Left cardiac atrium (tissue), 4 donors: ENCODE measurements at regions of chr6 and their contacts with region 1.

Region 1: DNA sequence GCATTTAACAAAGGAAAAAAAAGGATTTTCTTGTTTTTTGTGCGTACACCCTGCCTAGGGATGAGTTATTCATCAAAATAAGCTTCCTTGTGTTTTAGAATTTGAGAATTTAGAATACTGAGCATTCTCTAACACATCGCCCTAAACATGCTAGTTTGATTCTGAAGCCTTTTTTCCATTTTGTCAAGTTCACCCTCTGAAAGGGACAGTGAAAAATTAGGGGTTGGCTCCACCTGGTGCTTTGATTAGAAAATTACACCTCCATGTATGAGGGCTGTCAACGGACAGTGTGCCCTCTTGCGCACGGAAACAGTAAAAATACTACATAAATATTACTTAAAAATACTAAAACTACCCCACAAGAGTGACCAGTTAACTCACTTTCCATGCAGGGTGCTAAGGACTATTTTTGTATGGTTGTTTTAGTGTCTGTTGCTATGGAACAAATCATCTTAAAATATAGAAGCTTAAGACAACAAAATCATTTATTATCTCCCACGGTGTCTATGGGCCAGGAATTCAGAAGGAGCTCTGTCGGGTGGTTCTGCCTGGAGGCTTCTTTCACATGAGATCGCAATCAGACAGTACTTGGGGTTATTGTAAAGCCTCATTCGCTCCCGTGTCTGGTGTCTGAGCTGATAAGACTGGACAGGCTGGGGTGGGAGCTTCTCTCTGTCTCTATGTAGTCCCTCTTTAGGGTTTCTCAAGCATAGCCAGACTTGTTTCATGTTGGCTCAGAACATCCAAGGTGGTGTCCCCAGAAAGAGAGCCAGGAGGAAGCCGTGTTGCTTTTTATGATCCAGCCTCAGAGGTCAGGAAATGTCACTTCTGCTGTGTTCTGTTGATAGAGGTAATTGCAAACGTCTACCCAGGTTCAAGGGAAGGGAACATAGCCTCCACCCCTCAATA is 41.1 kb upstream of the TMEM170B start:
- DNase-seq: peak; percentile 42
- ATAC-seq: peak; percentile 91 to 95

Region 2: GRCh38 chr6:11144393-11144851 is 352.0 kb before region 1 on chr6:
- intact Hi-C with region 1: loop called (anchors 1 to 2 kb)
- DNase-seq: peak; percentile 84
- ATAC-seq: peak; percentile 92 to 95

Region 3: GRCh38 chr6:11172501-11173332 is 323.7 kb before region 1 on chr6:
- intact Hi-C with region 1: loop called (anchors 10 kb)
- DNase-seq: peak; percentile 76
- ATAC-seq: peak; percentile 65 to 67

Region 4: DNA sequence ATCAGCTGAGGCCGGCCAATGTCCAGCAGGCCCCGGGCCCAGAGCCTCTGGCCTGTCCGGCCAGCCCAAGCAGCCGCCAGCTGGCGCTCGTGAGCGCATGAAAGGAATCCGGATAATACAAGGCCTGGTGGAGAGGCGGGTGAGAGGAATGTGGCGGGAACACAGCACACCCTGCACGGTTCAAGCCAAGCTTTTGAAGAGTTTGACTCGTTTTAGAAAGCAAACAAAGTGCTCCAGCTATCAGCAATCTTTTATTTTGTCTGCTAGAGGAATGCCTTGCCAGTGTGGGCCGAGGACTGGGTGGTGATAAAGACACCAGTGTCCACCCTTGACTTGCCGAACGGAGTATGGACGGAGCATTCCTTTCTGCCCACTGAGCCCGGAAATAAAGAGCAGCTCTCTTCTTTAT is 254.6 kb before region 1 on chr6:
- intact Hi-C with region 1: loop called in 1 of 2 experiments (anchors 10 kb)
- DNase-seq: peak; percentile 88
- ATAC-seq: peak; percentile 95 to 98